ENCODE measurements at regions of chr20 and their contacts with region 1.

Region 1: GRCh38 chr20:9359561-9360308 is 154.7 kb upstream of the LAMP5 start:
- DNase-seq: peak; percentile 43 to 86 (median 66)
- H3K4me3 ChIP-seq: peak overlapping the region in 1 of 3 donors; percentile 31
- H3K27ac ChIP-seq: no peak overlapping the region
- H3K4me1 ChIP-seq: peaks cover 0 to 3% (median 0%) of the 10 kb centered on the region in 3 donors
- H3K27me3 ChIP-seq: no peaks in the 10 kb centered on the region
- CTCF ChIP-seq: peak; percentile 56

Region 2: DNA sequence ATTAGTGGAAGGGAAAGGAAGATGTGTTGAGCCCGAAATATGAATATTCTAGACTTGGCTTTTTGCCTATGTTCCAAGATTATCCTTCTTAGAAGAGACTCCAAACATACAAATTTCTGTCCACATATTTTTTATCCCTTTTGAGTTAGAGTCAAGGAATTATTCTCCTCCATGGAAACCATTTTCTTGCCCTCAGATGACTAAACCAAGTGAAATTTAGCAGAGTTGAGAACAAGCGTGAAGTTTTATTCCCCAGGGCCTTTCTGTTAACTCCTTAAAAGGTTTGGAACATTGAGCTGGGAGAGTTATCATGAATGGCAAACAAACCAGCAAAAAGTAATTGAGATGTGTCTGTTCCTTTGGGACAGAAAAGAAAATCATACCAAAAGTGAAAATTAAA is 576.9 kb before region 1 on chr20:
- intact Hi-C with region 1: loop called (anchors 10 kb)
- DNase-seq: no peak
- H3K4me3 ChIP-seq: no peak overlapping the region
- H3K27ac ChIP-seq: no peak overlapping the region
- H3K4me1 ChIP-seq: no peaks in the 10 kb centered on the region
- H3K27me3 ChIP-seq: no peaks in the 10 kb centered on the region
- CTCF ChIP-seq: no peak

Region 3: GRCh38 chr20:9442858-9443257 is 83.1 kb after region 1 on chr20:
- intact Hi-C with region 1: no loop called
- DNase-seq: no peak
- H3K4me3 ChIP-seq: no peak overlapping the region
- H3K27ac ChIP-seq: no peak overlapping the region
- H3K4me1 ChIP-seq: no peaks in the 10 kb centered on the region
- H3K27me3 ChIP-seq: no peaks in the 10 kb centered on the region
- CTCF ChIP-seq: no peak